Dorsolateral prefrontal cortex (tissue), 120 donors: ENCODE measurements at regions of chr17 and their contacts with region 1.

Region 1: DNA sequence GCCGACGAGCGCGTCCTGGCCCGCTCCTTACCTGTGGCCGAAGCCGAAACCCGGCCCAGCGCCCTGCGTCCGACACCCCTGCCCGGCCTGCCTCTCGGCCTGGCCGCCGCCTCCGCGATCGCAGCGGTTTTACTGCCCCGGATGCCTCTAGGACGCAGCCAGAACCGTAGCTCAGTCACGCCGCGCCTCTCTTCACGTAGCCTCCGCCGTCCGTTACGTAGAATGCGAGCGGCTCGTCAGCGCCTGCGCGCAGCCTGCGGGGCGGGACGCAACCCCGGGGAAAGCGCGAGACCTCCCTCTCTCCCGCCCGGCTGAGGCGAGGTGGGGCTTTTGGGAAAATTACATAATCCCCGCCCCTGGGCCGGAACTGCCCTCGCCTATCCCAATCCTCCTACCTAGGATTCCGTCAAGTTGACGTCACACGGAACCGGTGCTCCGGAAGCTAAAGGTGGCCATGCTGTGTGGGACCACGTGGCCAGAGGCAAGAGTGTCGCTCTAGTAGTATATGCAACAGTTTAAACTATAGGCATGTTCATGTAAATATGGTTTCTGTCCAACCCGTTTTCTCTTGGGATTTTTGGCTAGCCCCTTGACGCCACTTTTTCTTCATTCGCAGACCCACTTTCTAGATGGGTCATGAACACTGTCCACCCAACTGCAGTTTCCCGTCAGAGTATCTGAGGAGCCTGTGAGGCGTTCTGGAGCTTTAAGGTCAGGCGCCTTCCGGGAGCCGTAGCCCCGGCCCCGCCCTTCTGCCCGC is at the start of gene CCDC47:
- DNase-seq: peak; percentile 98 to 100 (median 100)
- H3K4me3 ChIP-seq: peak within 1 kb of the TSS; percentile 78 to 100 (median 95)
- H3K27ac ChIP-seq: peak within 1 kb of the TSS; percentile 86 to 99 (median 96)
- H3K27me3 ChIP-seq: no peaks in the 10 kb centered on the region
- CTCF ChIP-seq: peak in 12 of 56 donors; percentile 3 to 36 (median 16)
- total RNA-seq, gene CCDC47: 60.4 to 109 (median 83.6) TPM

Region 2: GRCh38 chr17:63549946-63550807 is 223.4 kb before region 1 on chr17 and contains the start of gene DCAF7:
- intact Hi-C with region 1: loop called in 1 of 2 experiments (anchors 2 kb)
- DNase-seq: peak; percentile 98 to 100 (median 100)
- H3K4me3 ChIP-seq: peak within 1 kb of the TSS; percentile 62 to 100 (median 97)
- H3K27ac ChIP-seq: peak within 1 kb of the TSS; percentile 63 to 96 (median 91)
- H3K27me3 ChIP-seq: no peaks in the 10 kb centered on the region
- CTCF ChIP-seq: peak in 20 of 56 donors; percentile 9 to 47 (median 26)
- total RNA-seq, gene DCAF7: 51.7 to 77.3 (median 64.0) TPM

Region 3: DNA sequence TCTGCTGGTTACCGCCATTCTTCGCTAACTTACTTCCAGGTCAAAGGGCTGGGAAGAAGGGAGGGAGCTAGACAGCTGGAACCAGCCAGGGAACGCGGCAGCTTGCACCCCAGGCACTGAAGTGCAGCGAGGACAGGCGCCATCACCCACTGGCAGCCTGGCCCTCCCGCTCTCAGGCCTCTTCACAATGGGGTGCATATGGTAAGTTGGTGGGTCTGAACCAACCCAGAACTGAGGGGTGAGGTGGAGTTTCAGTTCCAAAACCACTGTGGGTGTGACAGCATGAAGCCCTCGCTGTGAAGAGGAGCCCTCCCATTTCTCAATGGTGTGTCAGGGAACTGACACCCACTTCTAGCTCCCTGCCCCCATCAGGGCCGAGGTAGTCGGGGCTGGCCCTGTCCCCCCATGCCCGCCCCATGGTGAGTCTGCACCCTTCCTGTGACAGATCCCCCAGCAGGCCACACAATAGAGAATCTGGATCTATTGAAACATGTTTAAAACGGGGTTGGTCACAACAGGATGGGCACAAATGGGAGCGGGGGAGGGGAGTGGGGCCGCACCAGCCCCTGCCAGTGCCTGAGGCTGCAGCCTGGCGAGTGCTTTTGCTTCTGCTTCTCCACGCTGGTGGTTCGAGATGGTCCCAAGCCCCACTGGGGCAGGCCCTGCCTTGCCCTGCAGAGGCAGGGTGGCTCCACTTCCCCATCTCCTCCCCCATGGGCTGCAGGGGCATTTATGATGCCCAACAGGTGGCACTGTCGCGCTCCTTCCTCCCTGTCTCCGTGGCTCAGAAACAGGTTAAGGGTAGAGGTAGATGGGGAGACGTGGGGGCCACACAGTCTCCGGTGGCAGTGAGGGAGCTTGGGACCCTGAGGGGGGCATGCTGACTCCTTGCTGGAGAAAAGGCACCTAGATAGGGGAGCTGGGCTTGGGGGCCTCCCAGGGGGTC is 75.9 kb before region 1 on chr17:
- intact Hi-C with region 1: loop called in 1 of 2 experiments (anchors 5 kb)
- DNase-seq: no peak
- H3K4me3 ChIP-seq: peak overlapping the region in 27 of 59 donors; percentile 8 to 72 (median 61)
- H3K27ac ChIP-seq: peak overlapping the region in 51 of 59 donors; percentile 19 to 95 (median 67)
- H3K27me3 ChIP-seq: no peaks in the 10 kb centered on the region
- CTCF ChIP-seq: peak in 40 of 56 donors; percentile 8 to 46 (median 24)

Region 4: DNA sequence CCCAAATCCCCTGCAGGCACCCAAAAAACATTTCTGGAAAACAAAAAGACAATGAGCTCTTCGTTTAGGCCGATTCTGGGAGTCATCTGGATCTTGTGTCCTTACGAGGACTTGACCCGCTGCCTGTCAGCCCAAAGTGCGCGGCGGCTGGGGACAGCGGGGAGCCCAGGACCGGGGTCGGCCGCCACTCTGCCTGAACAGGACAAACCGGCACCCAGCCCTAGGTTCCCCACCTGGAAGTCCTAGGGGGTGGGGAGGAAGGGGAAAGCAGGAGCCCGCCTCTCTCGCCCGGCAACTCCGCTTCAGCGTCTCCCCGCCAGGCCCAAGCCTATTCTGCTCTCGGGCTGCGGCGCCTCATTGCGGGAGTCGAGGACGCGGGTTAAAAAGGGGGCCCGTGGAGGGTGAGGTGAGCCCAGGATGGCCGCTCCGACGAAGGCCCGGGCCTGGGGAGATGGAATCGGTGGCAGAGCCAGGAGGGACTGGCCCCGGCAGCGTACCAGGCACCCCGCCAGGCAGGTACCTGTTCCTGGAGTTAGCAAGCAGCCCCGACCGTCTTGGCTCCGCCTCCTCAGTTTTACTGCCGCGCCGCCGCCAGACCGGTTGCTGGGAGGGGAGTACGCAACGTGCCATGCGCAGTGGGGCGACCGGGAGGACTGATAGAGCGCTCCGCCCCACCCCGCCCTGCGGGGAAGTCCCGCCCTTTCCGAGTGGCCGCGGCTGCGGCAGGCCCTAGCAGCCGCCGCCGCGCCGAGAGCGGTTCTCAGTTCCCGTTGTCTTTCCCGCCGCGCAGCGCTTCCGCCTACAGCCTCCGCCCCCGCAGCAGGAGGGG is 32.1 kb before region 1 on chr17 and contains the start of gene STRADA:
- intact Hi-C with region 1: loop called (anchors 1 to 2 kb)
- DNase-seq: peak; percentile 94 to 99 (median 97)
- H3K4me3 ChIP-seq: peak within 1 kb of the TSS; percentile 65 to 100 (median 91)
- H3K27ac ChIP-seq: peak within 1 kb of the TSS; percentile 40 to 97 (median 88)
- H3K27me3 ChIP-seq: no peaks in the 10 kb centered on the region
- CTCF ChIP-seq: peak in 31 of 56 donors; percentile 6 to 57 (median 30)
- total RNA-seq, gene STRADA: 47.3 to 105 (median 79.1) TPM

Region 5: GRCh38 chr17:63827002-63827771 is 53.6 kb after region 1 on chr17 and contains the starts of genes FTSJ3 and PSMC5:
- intact Hi-C with region 1: loop called (anchors 1 to 2 kb)
- DNase-seq: peak; percentile 96 to 98 (median 97)
- H3K4me3 ChIP-seq: peak within 1 kb of the TSS; percentile 67 to 99 (median 92)
- H3K27ac ChIP-seq: peak within 1 kb of the TSS; percentile 80 to 100 (median 98)
- H3K27me3 ChIP-seq: no peaks in the 10 kb centered on the region
- CTCF ChIP-seq: peak in 52 of 56 donors; percentile 16 to 62 (median 46)
- total RNA-seq, gene FTSJ3: 13.7 to 39.6 (median 25.0) TPM
- total RNA-seq, gene PSMC5: 89.5 to 186 (median 136) TPM

Region 6: DNA sequence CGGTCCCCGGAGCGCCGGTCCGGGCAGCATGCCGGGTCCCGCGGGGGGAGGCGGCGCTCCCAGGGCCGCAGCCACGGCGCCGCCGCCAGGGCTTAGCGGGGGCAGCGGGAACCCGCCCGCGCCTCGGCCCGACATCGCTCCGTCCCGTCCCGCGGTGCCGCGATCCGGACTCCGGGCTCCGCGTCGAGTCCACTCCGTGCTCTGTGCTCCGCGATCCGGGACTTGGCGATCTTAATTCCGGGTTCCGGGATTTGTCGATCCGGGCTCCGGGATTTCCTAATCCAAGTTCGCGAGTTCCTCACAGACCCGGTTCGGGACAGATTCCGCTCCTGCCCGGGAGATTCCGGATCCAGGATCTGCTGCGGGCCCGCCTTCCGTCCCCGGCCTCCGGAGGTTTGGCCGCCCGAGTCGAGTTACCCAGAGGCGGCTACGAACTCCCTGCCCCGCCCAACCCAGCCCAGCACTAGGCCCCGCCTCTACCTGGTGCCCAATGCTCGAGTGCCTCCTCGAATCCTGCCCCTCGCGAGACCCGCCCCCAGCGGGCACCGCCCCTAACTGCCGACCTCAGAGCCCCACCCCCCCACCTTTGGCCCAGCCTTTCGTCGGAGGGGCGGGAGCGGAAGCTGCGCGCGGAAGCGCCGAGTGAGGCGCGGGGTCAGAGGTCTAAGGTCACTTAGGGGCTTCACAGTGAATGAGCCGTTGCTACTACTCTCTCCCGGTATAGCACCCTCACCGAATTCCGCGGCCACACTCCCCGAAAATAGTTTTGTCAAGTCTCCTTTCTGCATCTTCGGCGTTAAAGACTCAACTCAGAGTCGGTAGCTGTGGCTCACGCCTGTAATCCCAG is 69.2 kb after region 1 on chr17 and contains the start of gene SMARCD2:
- intact Hi-C with region 1: loop called in 1 of 2 experiments (anchors 2 kb)
- DNase-seq: peak; percentile 94 to 99 (median 97)
- H3K4me3 ChIP-seq: peak within 1 kb of the TSS; percentile 61 to 98 (median 88)
- H3K27ac ChIP-seq: peak within 1 kb of the TSS; percentile 51 to 100 (median 98)
- H3K27me3 ChIP-seq: no peaks in the 10 kb centered on the region
- CTCF ChIP-seq: peak in 26 of 56 donors; percentile 7 to 52 (median 18)
- total RNA-seq, gene SMARCD2: 20.4 to 70.8 (median 40.0) TPM

Region 7: GRCh38 chr17:64091116-64091515 is 317.6 kb after region 1 on chr17:
- intact Hi-C with region 1: no loop called
- DNase-seq: no peak
- H3K4me3 ChIP-seq: no peak overlapping the region
- H3K27ac ChIP-seq: no peak overlapping the region
- H3K27me3 ChIP-seq: no peaks in the 10 kb centered on the region
- CTCF ChIP-seq: no peak

Region 8: DNA sequence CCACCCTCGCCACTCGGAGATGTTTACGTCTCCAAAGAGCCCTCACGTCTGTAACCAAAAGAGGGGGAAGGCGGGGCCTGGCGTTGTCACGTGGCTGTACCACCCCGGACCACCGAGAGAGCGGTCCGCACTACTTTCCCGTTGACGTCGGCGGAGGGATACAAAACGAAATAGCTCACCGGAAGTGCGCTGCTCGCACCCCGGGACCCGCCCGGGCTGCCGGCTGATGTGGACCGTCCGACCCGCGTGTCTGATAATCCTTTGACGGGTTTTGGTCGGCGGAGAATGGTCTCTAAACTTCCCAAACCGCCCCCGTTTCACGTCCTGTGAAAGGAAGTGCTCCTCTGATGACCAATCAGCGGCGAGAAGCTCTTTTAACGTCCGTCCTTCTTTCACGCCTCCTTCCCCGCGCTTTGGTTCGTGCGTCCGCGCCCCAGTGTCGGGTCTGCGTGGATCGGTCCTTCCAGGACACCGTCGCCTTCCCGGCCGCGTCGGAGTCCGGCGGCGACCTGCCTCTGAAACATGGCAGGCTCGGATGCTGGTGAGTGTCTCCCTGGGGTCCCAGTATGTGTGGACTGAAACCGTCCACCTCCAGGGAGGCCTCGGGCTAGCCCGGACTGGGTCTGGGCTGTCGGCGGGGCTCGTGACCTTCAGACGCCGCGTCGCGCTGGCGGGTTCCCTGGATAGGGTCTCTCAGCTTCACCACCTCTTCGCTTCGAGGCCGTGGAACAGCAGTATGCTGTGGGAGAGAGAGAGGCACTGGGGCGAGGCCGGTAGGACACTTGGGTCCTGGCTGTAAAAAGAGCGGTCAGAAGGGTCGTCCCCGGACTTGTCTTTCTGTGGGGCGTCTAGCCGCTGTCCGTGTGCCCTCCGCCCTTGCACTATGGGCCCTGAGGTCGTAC is 733.3 kb after region 1 on chr17 and contains the start of gene CEP95:
- intact Hi-C with region 1: loop called in 1 of 2 experiments (anchors 5 kb)
- DNase-seq: peak; percentile 87 to 95 (median 94)
- H3K4me3 ChIP-seq: peak within 1 kb of the TSS; percentile 70 to 100 (median 95)
- H3K27ac ChIP-seq: peak within 1 kb of the TSS; percentile 95 to 100 (median 100)
- H3K27me3 ChIP-seq: no peaks in the 10 kb centered on the region
- CTCF ChIP-seq: peak in 3 of 56 donors; percentile 2 to 17 (median 7)
- total RNA-seq, gene CEP95: 38.9 to 94.4 (median 62.9) TPM